Gastrocnemius medialis (tissue), 4 donors: ENCODE measurements at regions of chr4 and their contacts with region 1.

Region 1: GRCh38 chr4:46515940-46516339 is 126.0 kb upstream of the GABRA2 start:
- DNase-seq: no peak
- ATAC-seq: no peak
- H3K4me3 ChIP-seq: no peak overlapping the region
- H3K27ac ChIP-seq: no peak overlapping the region
- H3K4me1 ChIP-seq: no peaks in the 10 kb centered on the region
- H3K27me3 ChIP-seq: no peaks in the 10 kb centered on the region
- CTCF ChIP-seq: no peak
- POLR2A ChIP-seq: no peak

Region 2: DNA sequence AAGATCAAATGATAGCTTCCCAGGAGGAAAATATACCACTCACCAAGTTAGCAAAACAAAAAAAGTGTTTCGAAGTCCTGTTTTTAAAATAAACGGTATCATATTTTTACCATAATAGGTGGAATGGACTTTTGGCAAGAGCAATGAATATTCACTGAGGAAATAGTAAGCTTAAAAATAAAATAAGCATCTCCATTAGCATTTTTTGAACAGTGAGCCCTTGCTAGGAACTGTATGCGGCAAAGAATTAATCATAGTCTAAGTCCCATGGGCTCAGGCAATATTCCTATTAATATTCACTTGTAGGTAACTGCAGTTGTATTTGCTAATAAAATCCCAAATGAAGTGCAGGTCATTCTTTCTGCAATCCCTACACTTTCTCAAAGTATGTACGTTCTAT is 65.7 kb after region 1 on chr4:
- in situ Hi-C with region 1: loop called in 1 of 4 experiments (anchors 10 kb)
- intact Hi-C with region 1: no loop called
- DNase-seq: no peak
- ATAC-seq: no peak
- H3K4me3 ChIP-seq: no peak overlapping the region
- H3K27ac ChIP-seq: no peak overlapping the region
- H3K4me1 ChIP-seq: no peaks in the 10 kb centered on the region
- H3K27me3 ChIP-seq: no peaks in the 10 kb centered on the region
- CTCF ChIP-seq: no peak
- POLR2A ChIP-seq: no peak